Natural killer cell (primary cell): ENCODE measurements at regions of chr5 and their contacts with region 1.

Region 1: DNA sequence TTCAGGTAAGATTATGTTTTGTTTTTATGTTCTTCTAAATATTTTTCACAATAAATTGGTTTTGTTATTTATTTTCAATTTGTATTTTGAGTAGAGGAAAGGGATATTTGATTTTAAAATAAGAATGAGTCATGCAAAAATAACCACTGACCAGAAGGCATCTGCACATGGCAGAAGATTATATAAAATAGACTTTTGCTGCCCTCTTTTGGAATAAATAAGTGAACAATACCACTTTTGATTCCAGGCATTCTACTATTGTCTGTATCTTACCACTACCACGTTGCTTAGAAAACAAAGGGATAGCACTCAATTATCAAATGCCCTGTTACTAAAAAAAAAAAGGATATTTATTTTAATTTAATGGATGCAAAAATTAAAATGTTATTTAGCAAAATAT is 227.3 kb upstream of the ITGA1 start:
- DNase-seq: peak in 1 of 2 donors; percentile 5
- ATAC-seq: no peak
- H3K4me3 ChIP-seq: no peak overlapping the region
- H3K4me3 Mint-ChIP-seq: no peak overlapping the region
- H3K27ac ChIP-seq: no peak overlapping the region
- H3K27ac Mint-ChIP-seq: no peak overlapping the region
- H3K4me1 ChIP-seq: no peaks in the 10 kb centered on the region
- H3K4me1 Mint-ChIP-seq: no peaks in the 10 kb centered on the region
- H3K27me3 ChIP-seq: no peaks in the 10 kb centered on the region
- H3K27me3 Mint-ChIP-seq: no peaks in the 10 kb centered on the region
- CTCF ChIP-seq: no peak

Region 2: DNA sequence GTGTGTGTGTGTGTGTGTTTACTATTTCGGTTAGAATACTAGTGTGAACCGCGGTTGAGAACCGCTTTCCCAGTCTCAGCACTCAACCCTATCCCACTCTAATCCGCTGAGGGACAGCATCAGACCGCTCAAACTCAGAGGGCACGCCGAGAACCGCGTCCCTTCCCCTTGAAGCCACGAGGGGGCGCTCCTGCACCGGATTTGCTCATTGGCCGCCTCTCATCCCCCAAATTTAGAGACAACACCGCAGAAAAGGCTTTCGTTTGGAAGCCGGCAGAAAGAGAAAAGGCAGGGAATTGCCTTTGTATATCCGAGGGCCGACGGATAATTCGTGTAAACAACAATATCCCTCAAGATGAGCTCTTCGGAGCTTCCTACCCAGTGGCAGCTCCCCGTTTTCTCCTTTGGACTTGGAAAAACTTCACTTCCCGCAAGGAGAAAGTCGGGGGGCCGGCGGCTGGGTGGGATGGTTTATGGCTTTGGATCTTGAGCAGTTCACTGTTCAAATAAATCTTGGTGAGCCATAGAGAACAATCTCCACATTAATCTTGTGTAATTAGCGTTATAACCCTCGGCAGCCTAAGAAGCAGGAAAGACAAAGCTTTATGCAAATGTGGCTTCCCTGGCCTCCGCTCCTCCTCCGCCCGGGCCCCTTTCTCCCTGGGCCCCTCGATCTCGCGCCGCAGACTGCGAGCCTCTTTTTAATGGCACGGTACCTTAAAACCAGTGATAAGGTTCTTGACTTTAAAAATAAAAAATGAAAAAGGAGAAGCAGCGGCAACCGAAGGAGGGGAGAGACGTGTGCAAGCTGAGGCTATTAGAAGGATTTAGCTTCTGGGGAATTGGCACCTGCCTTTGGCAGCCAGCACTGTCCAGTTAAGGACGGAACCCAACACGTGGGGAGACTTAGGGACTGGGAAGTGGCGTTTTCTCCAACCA is 1597.2 kb before region 1 on chr5:
- intact Hi-C with region 1: loop called (anchors 5 kb)
- DNase-seq: peak; percentile 32 to 72
- ATAC-seq: peak; percentile 59 to 78 (median 66)
- H3K4me3 ChIP-seq: peak overlapping the region; percentile 24
- H3K4me3 Mint-ChIP-seq: peak overlapping the region; percentile 72
- H3K27ac ChIP-seq: no peak overlapping the region
- H3K27ac Mint-ChIP-seq: no peak overlapping the region
- H3K4me1 ChIP-seq: peaks cover 29% of the 10 kb centered on the region
- H3K4me1 Mint-ChIP-seq: peaks cover 28 to 35% of the 10 kb centered on the region in 2 donors
- H3K27me3 ChIP-seq: peaks cover 48% of the 10 kb centered on the region
- H3K27me3 Mint-ChIP-seq: peaks cover 48 to 62% of the 10 kb centered on the region in 2 donors
- CTCF ChIP-seq: peak; percentile 56